Activated B cell treated with CpG ODN at 0.5 μM for 24 hours (primary cell): ENCODE measurements at regions of chr15 and their contacts with region 1.

Region 1: DNA sequence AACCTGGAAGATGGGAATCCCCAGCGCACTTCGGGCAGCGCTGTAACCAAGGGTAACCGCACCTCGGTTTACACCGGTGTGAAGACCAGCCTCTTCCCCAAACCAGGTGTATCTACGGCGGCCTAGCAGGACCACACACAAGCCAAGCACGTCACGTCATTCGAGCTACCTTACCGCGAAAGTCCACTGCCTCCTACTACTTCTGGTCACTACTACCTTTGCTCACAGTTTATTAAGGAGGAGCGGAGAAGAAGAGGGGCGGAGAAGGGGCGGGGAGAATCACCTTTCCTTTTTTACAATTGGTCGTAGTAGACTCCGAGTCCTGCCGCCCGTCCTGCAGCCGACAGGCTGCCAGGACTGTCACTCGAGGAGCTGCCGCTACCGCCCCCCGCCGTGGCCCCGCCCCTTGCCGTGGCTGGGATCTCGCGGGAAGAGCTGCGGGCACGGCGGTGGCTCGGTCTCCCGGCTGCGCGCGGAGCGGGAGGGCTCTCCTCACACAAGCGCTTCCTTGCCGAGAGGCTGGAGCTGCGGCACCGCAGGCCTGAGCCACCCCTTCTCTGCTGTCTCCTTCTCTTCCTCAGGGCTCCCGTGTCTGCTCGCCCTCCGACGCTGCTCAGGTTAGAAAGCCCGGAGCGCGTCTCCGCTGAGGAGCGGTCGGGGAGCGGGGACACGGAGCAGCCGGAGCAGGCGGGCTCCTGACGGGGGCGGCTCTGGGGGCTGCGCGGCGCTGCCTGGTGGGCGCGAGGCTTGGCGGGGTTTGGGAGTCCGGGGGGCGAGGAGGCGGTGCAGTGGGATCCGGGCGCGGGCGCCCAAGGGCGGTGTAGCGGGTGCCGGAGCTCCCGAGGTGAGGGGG is at the start of gene GLCE:
- DNase-seq: peak; percentile 94
- ATAC-seq: peak; percentile 93
- H3K4me3 Mint-ChIP-seq: peak within 1 kb of the TSS; percentile 90
- H3K27ac Mint-ChIP-seq: peak within 1 kb of the TSS; percentile 67
- H3K4me1 Mint-ChIP-seq: peaks cover 13% of the 10 kb centered on the region
- H3K27me3 Mint-ChIP-seq: peaks cover 8% of the 10 kb centered on the region
- CTCF ChIP-seq: no peak
- total RNA-seq, gene GLCE: 3.9 and 5.6 TPM in 2 replicates

Region 2: DNA sequence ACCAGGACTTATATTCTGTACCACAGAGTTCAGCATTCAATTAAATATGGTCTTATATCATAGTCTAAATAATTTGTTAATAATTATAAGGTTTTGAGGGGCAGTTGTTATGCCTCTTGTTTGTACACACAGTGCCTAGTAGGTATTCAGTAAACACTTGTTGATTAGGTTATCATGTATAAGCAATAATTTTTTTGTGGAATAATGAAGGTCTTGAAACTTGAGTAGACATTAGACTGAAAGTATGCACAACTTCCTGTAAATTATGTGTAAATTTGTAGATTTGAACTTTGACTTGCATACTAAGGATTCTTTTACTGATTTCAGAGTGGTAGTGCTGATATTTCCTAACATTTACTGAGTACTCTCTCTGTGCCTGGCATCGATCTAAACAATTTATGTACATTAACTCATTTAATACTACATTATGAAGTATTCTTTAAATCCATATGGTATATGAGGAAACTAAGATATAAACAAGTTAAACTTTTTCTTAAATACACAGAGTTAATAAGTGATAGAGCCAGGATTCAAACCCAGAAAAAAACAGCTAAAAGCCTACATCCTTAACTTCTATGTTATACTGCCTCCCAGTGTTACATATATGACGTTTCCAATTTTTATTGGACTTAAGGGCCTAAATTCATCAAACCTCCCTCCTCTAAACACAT is 65.1 kb after region 1 on chr15:
- CTCF ChIA-PET with region 1: no interaction called
- POLR2A ChIA-PET with region 1: no interaction called
- intact Hi-C with region 1: no loop called
- DNase-seq: no peak
- ATAC-seq: no peak
- H3K4me3 Mint-ChIP-seq: no peak overlapping the region
- H3K27ac Mint-ChIP-seq: no peak overlapping the region
- H3K4me1 Mint-ChIP-seq: no peaks in the 10 kb centered on the region
- H3K27me3 Mint-ChIP-seq: no peaks in the 10 kb centered on the region
- CTCF ChIP-seq: no peak

Region 3: DNA sequence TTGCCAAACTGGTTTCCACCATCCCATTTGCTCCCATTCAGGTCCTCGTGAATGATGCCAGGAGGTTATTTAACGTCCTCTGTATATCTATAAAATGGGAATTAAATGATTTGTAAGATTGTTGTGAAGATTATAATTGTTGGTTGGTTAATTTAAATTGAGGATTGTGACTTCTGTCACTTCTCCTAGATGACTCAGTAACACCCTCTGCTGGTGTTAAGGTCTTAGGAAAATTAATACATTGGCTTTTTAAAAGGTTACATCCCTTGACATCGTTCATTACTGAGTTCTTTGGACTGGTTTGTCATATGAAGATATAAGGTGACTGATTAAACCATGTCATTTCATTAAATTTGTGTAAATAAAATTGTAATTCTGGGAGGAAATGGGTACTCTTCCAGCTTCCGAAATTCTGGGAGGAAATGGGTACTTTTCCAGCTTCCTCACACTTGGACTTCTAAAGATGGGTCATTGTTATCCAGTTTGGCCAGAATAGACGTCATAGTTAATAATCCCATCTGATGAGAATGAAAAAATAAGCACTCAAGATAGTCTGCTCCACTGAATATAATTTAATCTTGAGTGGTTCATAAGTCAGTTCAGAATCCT is 105.1 kb after region 1 on chr15:
- CTCF ChIA-PET with region 1: no interaction called
- POLR2A ChIA-PET with region 1: no interaction called
- intact Hi-C with region 1: loop called (anchors 5 kb)
- DNase-seq: no peak
- ATAC-seq: no peak
- H3K4me3 Mint-ChIP-seq: no peak overlapping the region
- H3K27ac Mint-ChIP-seq: no peak overlapping the region
- H3K4me1 Mint-ChIP-seq: no peaks in the 10 kb centered on the region
- H3K27me3 Mint-ChIP-seq: no peaks in the 10 kb centered on the region
- CTCF ChIP-seq: no peak

Region 4: GRCh38 chr15:69337133-69337532 is 176.8 kb after region 1 on chr15:
- CTCF ChIA-PET with region 1: no interaction called
- POLR2A ChIA-PET with region 1: no interaction called
- intact Hi-C with region 1: no loop called
- DNase-seq: no peak
- ATAC-seq: no peak
- H3K4me3 Mint-ChIP-seq: no peak overlapping the region
- H3K27ac Mint-ChIP-seq: no peak overlapping the region
- H3K4me1 Mint-ChIP-seq: no peaks in the 10 kb centered on the region
- H3K27me3 Mint-ChIP-seq: peaks cover 2% of the 10 kb centered on the region
- CTCF ChIP-seq: no peak

Region 5: GRCh38 chr15:69413822-69414700 is 253.7 kb after region 1 on chr15 and contains the start of gene KIF23:
- CTCF ChIA-PET with region 1: no interaction called
- POLR2A ChIA-PET with region 1: no interaction called
- intact Hi-C with region 1: loop called (anchors 5 kb)
- DNase-seq: peak; percentile 87
- ATAC-seq: peak; percentile 98
- H3K4me3 Mint-ChIP-seq: peak within 1 kb of the TSS; percentile 89
- H3K27ac Mint-ChIP-seq: peak within 1 kb of the TSS; percentile 50
- H3K4me1 Mint-ChIP-seq: peaks cover 11% of the 10 kb centered on the region
- H3K27me3 Mint-ChIP-seq: peaks cover 8% of the 10 kb centered on the region
- CTCF ChIP-seq: no peak
- total RNA-seq, gene KIF23: 1.0 and 1.5 TPM in 2 replicates

Region 6: DNA sequence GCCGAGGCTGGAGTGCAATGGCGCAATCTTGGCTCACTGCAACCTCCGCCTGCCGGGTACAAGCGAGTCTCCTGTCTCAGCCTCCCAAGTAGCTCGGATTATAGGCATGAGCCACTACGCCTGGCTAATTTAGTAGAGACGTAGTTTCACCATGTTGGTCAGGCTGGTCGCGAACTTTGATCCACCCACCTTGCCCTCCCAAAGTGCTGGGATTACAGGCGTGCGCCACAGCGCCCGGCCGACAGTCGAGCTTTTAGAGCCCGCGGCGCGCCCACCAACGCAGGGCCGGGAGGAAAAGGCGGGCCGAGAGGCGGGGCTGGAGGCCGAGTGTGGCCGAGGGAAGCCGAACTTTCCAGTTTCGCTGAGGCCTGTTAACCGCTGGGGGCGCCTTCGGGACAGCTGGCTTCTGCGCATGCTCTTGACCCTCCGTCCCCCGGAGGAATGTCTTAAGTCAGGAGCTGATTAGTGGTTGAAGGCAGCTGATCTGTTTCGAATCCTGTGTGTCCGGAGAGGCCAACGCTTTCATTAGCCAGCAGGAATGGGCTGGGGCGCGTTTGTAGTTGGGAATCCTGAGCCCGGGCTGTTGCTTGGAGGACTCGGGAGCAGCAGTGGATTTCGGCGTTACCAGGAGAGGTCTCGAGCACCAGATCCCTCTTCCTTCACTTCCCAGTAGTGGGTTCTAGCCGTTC is 302.3 kb after region 1 on chr15:
- CTCF ChIA-PET with region 1: no interaction called
- POLR2A ChIA-PET with region 1: no interaction called
- intact Hi-C with region 1: loop called (anchors 5 kb)
- DNase-seq: peak; percentile 87
- ATAC-seq: peak; percentile 99
- H3K4me3 Mint-ChIP-seq: peak overlapping the region; percentile 91
- H3K27ac Mint-ChIP-seq: peak overlapping the region; percentile 82
- H3K4me1 Mint-ChIP-seq: peaks cover 23% of the 10 kb centered on the region
- H3K27me3 Mint-ChIP-seq: no peaks in the 10 kb centered on the region
- CTCF ChIP-seq: peak; percentile 78

Region 7: DNA sequence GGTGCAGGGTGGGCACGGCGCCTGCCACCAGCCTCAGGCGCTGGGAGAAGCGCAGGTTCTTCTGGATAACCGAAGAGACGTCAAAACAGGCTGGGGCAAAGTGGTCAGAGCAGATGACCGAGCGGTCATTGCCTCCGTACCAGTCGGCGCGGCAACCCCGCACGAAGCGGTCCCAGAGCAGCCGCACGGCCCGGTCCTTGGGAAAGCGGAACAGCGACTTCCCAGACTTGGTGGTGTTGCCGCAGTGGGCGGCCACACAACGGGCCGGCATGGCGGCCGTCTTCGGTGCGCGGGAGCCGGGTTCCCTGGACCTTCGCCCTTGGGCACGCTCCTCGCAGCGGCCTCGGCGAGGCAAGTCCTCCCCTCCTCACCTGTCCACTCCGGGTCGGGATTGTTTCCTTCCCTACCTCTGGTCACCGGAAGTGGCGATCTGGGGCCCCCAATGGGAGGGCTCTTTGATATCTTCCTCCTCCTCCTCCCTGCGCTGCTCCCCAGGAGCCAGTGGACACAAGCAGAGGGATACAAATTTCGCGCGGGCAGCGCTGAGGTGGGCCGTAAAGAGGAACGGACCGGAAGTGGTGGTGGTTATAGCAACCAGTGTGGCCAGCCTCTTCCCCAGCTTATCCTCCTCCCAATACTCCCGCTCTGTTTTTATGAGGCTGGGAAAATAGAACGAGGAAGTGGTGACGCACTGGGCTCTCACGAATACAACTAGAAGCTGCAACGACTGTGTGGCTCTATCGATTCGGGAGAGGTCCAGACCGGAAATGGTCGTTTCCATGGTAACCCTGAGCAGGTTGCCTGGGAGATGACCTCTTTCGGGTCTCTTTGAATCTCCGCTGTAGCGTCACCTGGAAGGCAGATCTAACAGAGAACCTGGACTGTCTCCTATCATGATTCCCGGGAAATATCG is 1731.9 kb after region 1 on chr15 and contains the starts of genes LRRC49 and THAP10:
- CTCF ChIA-PET with region 1: no interaction called
- POLR2A ChIA-PET with region 1: no interaction called
- intact Hi-C with region 1: loop called (anchors 2 kb)
- DNase-seq: peak; percentile 26
- ATAC-seq: peak; percentile 73
- H3K4me3 Mint-ChIP-seq: peak within 1 kb of the TSS; percentile 93
- H3K27ac Mint-ChIP-seq: peak within 1 kb of the TSS; percentile 77
- H3K4me1 Mint-ChIP-seq: peaks cover 21% of the 10 kb centered on the region
- H3K27me3 Mint-ChIP-seq: peaks cover 11% of the 10 kb centered on the region
- CTCF ChIP-seq: no peak
- total RNA-seq, gene LRRC49: 0.84 and 1.0 TPM in 2 replicates
- total RNA-seq, gene THAP10: 0.27 and 0.34 TPM in 2 replicates